WTC11 (cell line): ENCODE measurements at regions of chr2 and their contacts with region 1.

Region 1: GRCh38 chr2:119126650-119127049 is 31.9 kb downstream of the C1QL2 start:
- DNase-seq: peak; percentile 85
- ATAC-seq: peak; percentile 92
- H3K4me3 Mint-ChIP-seq: peak overlapping the region; percentile 54
- H3K27ac Mint-ChIP-seq: no peak overlapping the region
- H3K4me1 Mint-ChIP-seq: peaks cover 46% of the 10 kb centered on the region
- H3K27me3 Mint-ChIP-seq: peaks cover 30% of the 10 kb centered on the region
- CTCF ChIP-seq: peak; percentile 78; the same call in 1 of the 2 replicates

Region 2: DNA sequence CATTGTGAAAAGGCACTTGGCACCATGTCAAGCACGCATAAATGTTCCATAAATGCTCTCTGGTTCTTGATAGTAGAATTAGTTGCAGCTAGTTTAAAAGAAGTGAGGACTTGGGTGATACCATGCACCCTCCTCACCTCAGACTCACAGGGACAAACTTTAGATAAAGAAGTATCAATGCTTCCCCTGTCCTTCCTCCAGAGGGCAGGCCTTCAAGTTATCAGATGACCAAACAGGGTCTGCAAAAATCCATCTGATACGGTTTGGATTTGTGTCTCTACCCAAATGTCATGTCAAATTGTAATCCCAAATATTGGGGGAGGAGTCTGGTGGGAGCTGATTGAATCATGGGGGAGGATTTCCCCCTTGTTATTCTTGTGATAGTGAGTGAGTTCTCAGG is 22.2 kb before region 1 on chr2:
- CTCF ChIA-PET with region 1: interaction called, 17 read pairs
- POLR2A ChIA-PET with region 1: no interaction called
- DNase-seq: no peak
- ATAC-seq: peak; percentile 63
- H3K4me3 Mint-ChIP-seq: no peak overlapping the region
- H3K27ac Mint-ChIP-seq: no peak overlapping the region
- H3K4me1 Mint-ChIP-seq: peaks cover 11% of the 10 kb centered on the region
- H3K27me3 Mint-ChIP-seq: peaks cover 6% of the 10 kb centered on the region; the same call in 1 of the 2 replicates
- CTCF ChIP-seq: no peak

Region 3: DNA sequence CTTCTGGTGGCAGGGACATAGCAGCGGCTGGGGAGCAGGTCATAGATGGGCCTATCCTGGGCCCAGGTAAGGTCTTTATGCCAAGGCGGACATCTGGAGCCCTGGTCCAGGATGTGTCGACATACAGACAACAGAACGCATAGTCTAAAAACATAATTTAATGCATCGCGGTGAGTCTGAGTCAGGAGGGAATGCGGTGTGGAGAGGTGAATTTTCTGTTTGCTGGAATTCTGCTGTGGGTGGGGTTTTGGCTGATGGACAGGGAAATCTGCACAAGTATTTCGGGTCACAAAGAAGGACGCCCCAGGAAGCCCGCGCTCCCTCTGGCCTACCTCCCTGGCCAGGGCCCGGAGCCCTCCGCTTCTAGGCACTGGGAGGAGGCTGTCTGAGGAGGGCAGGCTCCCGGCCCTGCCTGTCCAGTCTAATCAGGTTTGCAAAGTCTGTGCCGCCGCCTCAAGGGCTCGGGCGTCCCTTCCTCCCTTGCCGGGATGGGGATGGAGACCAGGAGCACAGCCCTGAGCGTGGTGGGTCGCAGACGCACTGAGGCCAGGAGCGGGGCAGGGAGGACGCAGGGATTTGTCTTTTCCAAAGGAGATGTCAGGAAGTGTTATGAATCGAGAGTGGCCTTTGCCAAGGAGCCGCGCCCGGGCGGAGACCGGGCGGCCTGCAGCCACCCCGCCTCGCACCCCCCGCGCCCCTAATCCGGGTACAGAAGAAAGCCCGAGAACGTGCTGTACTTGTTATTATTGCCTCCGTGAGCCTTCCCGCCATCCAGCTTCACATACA is 29.6 kb after region 1 on chr2:
- CTCF ChIA-PET with region 1: interaction called, 19 read pairs
- POLR2A ChIA-PET with region 1: no interaction called
- DNase-seq: peak; percentile 62
- ATAC-seq: peak; percentile 37
- H3K4me3 Mint-ChIP-seq: peak overlapping the region; percentile 93
- H3K27ac Mint-ChIP-seq: peak overlapping the region; percentile 55; the same call in 1 of the 2 replicates
- H3K4me1 Mint-ChIP-seq: peaks cover 37% of the 10 kb centered on the region
- H3K27me3 Mint-ChIP-seq: peaks cover 49% of the 10 kb centered on the region
- CTCF ChIP-seq: no peak